GM10248 (cell line): ENCODE measurements at regions of chr17 and their contacts with region 1.

Region 1: DNA sequence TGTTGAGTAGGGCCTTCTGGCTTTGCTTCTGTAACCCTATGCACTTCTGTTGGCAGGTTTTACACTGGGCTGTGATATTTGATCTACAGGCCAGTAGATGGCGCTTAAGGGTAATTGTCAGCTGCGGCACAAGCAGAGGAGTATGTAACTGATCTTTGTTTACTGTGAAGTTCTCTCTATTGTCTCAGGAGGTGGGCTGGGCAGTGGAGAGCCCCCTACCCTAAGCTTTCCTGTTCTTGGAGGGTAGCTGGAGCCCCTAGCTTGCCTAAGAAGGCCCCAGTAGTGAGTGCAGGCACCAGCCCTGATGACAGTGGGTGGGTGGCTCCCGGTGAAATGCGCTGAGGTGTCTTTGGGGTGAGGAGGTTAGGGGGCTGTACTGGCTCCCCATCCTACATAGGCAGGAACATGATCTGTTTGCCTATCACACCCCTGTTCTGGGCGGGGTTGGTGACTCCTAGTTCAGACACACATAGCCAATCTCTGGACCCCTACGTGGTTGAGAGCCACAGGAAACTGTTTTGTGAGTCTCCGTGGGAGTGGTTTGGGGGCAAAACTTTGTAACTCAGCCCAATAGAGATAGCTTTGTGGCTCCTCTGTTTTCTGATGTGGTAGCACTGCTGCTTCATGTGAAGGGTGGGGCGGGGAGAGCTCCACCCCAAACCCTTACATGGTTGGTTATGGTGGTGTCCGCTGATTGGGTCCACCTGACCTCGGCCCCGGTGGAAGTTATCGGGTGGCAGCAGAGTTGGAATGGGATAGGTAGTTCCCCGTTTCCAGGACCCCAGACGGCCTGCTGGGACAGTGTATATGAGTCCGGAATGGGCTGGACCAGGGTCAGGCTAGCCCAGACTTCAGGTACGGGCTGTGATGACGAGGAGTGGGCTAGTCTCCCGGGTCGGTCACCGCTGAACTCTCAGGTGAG is 60.4 kb downstream of the SLFN11 start:
- DNase-seq: peak; percentile 70
- CTCF ChIP-seq: peak; percentile 76

Region 2: DNA sequence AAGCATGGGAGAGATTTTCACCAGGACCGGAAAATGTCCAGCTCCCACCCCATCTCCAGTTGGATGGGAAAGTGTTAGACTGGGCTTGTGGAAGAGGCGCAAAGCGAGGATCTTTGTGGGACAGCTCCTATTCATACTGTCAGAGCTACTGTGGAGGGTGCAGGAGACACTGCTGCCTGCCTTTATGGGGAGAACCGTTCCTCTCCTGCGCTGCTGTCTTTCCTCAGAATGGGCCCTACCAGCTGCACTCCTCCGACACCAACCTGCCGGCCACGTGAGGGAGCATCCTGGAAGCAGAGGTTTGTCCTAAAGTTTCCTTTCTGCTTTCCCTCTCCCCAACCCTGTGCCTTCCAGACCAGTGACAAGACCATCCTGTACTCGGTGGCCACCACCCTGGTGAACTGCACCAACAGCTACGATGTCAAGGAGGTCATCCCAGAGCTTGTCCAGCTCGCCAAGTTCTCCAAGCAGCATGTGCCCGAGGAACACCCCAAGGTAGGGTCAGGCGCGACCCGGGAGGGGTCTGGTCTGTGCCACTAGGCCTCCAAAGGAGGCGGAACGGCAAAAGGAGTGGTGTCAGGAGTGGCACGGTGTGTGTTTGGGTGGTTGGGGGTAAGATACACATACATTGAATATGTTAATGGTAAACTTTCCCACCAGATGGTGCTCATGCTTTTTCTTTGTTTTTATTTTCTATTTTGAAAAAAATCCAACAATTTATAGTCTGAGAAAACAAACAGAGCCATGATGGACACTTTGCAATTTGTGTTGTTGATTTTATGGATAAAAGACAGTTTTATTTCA is 141.9 kb before region 1 on chr17:
- CTCF ChIA-PET with region 1: interaction called, 10 read pairs
- POLR2A ChIA-PET with region 1: no interaction called
- DNase-seq: peak; percentile 53
- CTCF ChIP-seq: peak; percentile 11

Region 3: GRCh38 chr17:35299129-35299528 is 13.9 kb before region 1 on chr17:
- CTCF ChIA-PET with region 1: interaction called, 20 read pairs
- POLR2A ChIA-PET with region 1: no interaction called
- DNase-seq: no peak
- CTCF ChIP-seq: no peak

Region 4: GRCh38 chr17:35337364-35337763 is 24.3 kb after region 1 on chr17:
- CTCF ChIA-PET with region 1: interaction called, 16 read pairs
- POLR2A ChIA-PET with region 1: no interaction called
- DNase-seq: no peak
- CTCF ChIP-seq: no peak

Region 5: GRCh38 chr17:35486920-35487732 is 174.1 kb after region 1 on chr17:
- CTCF ChIA-PET with region 1: interaction called, 18 read pairs
- POLR2A ChIA-PET with region 1: no interaction called
- DNase-seq: peak; percentile 88
- CTCF ChIP-seq: no peak

Region 6: GRCh38 chr17:35540589-35541404 is 227.7 kb after region 1 on chr17:
- CTCF ChIA-PET with region 1: interaction called, 207 read pairs
- POLR2A ChIA-PET with region 1: no interaction called
- DNase-seq: no peak
- CTCF ChIP-seq: no peak